Left lung (tissue), 14 donors: ENCODE measurements at regions of chr17 and their contacts with region 1.

Region 1: GRCh38 chr17:17859909-17860765 is 23.4 kb upstream of the SREBF1 start:
- DNase-seq: peak in 3 of 4 donors; percentile 75 to 91 (median 77)
- ATAC-seq: peak; percentile 97
- H3K4me3 ChIP-seq: no peak overlapping the region
- H3K27ac ChIP-seq: peak overlapping the region; percentile 24 to 30
- H3K4me1 ChIP-seq: peaks cover 7 to 14% of the 10 kb centered on the region in 2 donors
- H3K27me3 ChIP-seq: no peaks in the 10 kb centered on the region
- CTCF ChIP-seq: peak; percentile 92 to 95

Region 2: DNA sequence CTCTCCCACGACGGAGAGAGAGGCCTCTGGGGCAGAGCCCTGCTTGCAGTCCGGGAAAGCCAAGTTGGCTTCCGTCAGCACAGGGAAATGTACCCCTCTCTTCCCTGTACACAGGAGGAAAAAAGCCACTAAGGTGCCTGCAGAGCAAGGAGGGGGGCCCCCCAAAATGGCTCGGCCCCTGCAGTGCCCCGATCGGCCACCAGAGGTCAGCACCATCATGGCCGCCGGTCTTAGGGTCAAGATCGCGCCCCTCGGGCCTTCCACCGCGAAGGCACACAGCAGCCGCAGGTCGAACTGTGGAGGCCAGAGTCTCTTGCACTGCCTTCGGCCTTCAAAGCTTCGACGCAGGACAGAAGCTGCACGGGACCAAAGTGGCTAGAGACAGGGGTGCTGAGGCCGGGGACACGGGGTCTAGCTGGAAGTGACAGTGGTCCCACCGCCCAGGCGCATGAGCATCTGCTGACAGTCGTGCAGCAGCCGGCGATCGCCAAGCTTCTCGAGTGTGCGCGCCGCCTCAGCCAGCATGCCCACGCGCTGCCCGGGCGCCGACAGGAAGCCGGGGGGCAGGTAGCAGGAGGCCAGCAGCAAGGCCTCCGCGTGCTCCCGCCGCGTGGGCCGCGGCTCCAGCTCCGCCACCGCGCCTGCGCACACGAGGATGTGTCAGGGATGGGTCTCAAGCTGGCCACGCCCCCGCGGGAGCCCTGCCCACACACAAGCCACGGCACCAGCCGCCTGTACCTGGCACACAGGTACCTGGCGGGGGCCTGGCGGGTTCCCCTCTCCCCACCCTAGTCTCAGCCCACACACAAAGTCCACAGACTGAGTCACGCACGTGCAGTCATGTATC is 47.7 kb before region 1 on chr17:
- intact Hi-C with region 1: loop called (anchors 5 to 10 kb)
- DNase-seq: peak in 2 of 4 donors; percentile 73 to 91
- ATAC-seq: peak; percentile 69
- H3K4me3 ChIP-seq: no peak overlapping the region
- H3K27ac ChIP-seq: peak overlapping the region; percentile 23 to 33
- H3K4me1 ChIP-seq: peaks cover 12 to 22% of the 10 kb centered on the region in 2 donors
- H3K27me3 ChIP-seq: no peaks in the 10 kb centered on the region
- CTCF ChIP-seq: peak; percentile 100

Region 3: GRCh38 chr17:17919169-17920107 is 59.3 kb after region 1 on chr17:
- intact Hi-C with region 1: no loop called
- DNase-seq: peak in 3 of 4 donors; percentile 73 to 84 (median 73)
- ATAC-seq: peak; percentile 81
- H3K4me3 ChIP-seq: no peak overlapping the region
- H3K27ac ChIP-seq: no peak overlapping the region
- H3K4me1 ChIP-seq: peaks cover 20 to 47% of the 10 kb centered on the region in 2 donors
- H3K27me3 ChIP-seq: no peaks in the 10 kb centered on the region
- CTCF ChIP-seq: peak; percentile 67 to 71

Region 4: GRCh38 chr17:18038861-18039534 is 178.9 kb after region 1 on chr17 and contains the starts of genes ATPAF2 and GID4:
- intact Hi-C with region 1: no loop called
- DNase-seq: peak; percentile 98 to 100 (median 100)
- ATAC-seq: peak; percentile 97
- H3K4me3 ChIP-seq: peak within 1 kb of the TSS; percentile 87 to 96
- H3K27ac ChIP-seq: peak within 1 kb of the TSS; percentile 68 to 79
- H3K4me1 ChIP-seq: peaks cover 8 to 51% of the 10 kb centered on the region in 2 donors
- H3K27me3 ChIP-seq: no peaks in the 10 kb centered on the region
- CTCF ChIP-seq: no peak
- polyA plus RNA-seq, gene ATPAF2: 21.3 to 26.6 (median 22.8) TPM
- polyA plus RNA-seq, gene GID4: 12.4 to 15.1 (median 13.4) TPM